CD8-positive, alpha-beta T cell (primary cell): ENCODE measurements at regions of chr13 and their contacts with region 1.

Region 1: DNA sequence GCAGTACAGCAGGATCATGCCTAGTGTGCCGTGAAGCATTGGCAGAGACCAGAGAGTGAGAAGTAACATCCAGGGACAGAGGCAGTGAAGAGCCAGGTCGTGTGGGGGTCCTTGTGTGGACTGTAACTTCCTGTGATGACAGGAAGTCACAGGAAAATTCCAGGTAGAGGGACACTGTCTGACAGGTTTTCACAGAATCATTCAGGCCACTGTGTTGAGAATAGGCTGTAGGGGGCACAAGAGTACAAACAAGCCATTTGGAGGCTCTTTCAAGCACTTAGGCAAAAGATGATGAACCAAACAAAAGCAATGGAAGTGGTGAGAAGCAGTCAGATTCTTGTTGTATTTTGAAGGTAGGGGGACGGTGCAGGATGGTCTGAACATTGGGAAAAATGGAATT is 46.4 kb downstream of the N4BP2L1 start:
- DNase-seq: peak in 5 of 9 experiments; percentile 17 to 70 (median 30)
- ATAC-seq: peak; percentile 80
- H3K4me3 ChIP-seq: no peak overlapping the region
- H3K4me3 Mint-ChIP-seq: no peak overlapping the region
- H3K27ac ChIP-seq: no peak overlapping the region
- H3K27ac Mint-ChIP-seq: no peak overlapping the region
- H3K4me1 ChIP-seq: no peaks in the 10 kb centered on the region
- H3K4me1 Mint-ChIP-seq: no peaks in the 10 kb centered on the region
- H3K27me3 ChIP-seq: no peaks in the 10 kb centered on the region
- H3K27me3 Mint-ChIP-seq: no peaks in the 10 kb centered on the region
- CTCF ChIP-seq: peak; percentile 51

Region 2: DNA sequence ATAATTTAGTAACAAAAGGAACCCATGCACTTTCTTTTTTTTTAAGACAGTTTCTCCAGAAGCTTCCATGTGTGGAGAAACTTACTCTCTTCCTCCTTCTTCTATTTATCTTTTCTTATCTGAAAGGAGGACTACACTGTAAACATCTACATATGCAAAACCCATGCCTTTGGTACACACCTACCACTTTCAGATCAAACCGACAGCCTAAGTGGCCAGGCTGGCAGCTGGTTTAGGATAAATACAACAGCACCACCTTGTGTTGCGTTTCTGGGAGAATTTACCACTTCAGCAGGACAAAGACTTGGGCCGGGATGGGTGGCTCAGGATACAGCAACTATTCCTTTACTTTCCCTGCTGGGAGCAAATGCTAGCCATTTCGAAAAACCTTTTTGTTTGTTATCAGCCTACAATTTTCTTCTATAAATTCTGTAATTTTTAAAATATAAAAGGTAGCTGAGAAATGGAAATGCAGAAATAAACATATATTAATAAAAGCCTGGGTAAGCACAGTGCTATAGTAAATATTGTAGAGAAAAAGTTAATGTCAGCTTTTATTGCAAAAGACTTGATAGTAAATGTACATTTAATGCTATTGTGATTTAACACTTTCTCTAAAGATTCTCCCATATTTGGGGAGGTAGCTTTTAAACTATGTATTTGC is 1342.4 kb after region 1 on chr13:
- CTCF ChIA-PET with region 1: no interaction called
- POLR2A ChIA-PET with region 1: no interaction called
- intact Hi-C with region 1: loop called in 1 of 2 experiments (anchors 5 kb)
- DNase-seq: peak; percentile 21 to 82 (median 56)
- ATAC-seq: peak; percentile 84
- H3K4me3 ChIP-seq: no peak overlapping the region
- H3K4me3 Mint-ChIP-seq: no peak overlapping the region
- H3K27ac ChIP-seq: no peak overlapping the region
- H3K27ac Mint-ChIP-seq: no peak overlapping the region
- H3K4me1 ChIP-seq: peaks cover 6% of the 10 kb centered on the region
- H3K4me1 Mint-ChIP-seq: peaks cover 13% of the 10 kb centered on the region
- H3K27me3 ChIP-seq: no peaks in the 10 kb centered on the region
- H3K27me3 Mint-ChIP-seq: no peaks in the 10 kb centered on the region
- CTCF ChIP-seq: peak; percentile 65